ENCODE measurements at regions of chr10 and their contacts with region 1.

Region 1: GRCh38 chr10:13787015-13787421 is 200.3 kb downstream of the PRPF18 start:
- DNase-seq: peak in 1 of 2 donors; percentile 46
- ATAC-seq: peak in 7 of 8 donors; percentile 22 to 69 (median 54)
- H3K4me3 ChIP-seq: no peak overlapping the region
- H3K27ac ChIP-seq: peak overlapping the region in 8 of 10 donors; percentile 16 to 82 (median 68)
- H3K4me1 ChIP-seq: peaks cover 12 to 51% (median 36%) of the 10 kb centered on the region in 9 donors
- H3K27me3 ChIP-seq: no peaks in the 10 kb centered on the region
- CTCF ChIP-seq: no peak

Region 2: GRCh38 chr10:13673156-13673555 is 113.9 kb before region 1 on chr10:
- intact Hi-C with region 1: no loop called
- DNase-seq: no peak
- ATAC-seq: no peak
- H3K4me3 ChIP-seq: no peak overlapping the region
- H3K27ac ChIP-seq: no peak overlapping the region
- H3K4me1 ChIP-seq: peaks cover 0 to 57% (median 20%) of the 10 kb centered on the region in 9 donors
- H3K27me3 ChIP-seq: no peaks in the 10 kb centered on the region
- CTCF ChIP-seq: no peak

Region 3: GRCh38 chr10:13882112-13882711 is 95.2 kb after region 1 on chr10:
- intact Hi-C with region 1: loop called in 1 of 10 experiments (anchors 5 kb)
- DNase-seq: peak in 1 of 2 donors; percentile 69
- ATAC-seq: peak; percentile 70 to 94 (median 82)
- H3K4me3 ChIP-seq: peak overlapping the region in 1 of 10 donors; percentile 11
- H3K27ac ChIP-seq: peak overlapping the region; percentile 56 to 92 (median 76)
- H3K4me1 ChIP-seq: peaks cover 7 to 66% (median 43%) of the 10 kb centered on the region in 9 donors
- H3K27me3 ChIP-seq: no peaks in the 10 kb centered on the region
- CTCF ChIP-seq: no peak

Region 4: DNA sequence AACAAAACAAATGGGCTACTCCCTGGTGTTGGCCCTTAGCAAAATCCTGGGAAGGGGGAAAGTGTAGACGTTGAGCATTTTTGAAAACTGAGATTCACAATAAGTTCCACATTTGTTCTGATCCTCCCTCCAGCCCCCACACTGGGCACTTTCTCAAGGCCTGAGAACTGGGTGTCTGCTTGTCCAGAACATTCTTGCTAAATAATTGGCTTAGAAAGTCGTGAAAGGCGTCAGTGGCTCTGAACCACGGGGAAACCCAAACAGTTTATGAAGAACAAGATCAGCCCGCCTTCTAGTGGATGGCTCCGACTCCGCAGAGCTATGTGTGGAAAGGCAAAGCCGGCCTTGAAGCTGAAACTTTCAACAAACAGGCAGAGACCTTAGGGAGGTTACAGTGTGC is 169.8 kb after region 1 on chr10:
- intact Hi-C with region 1: loop called in 3 of 10 experiments (anchors 5 to 10 kb)
- DNase-seq: peak; percentile 35 to 59
- ATAC-seq: peak; percentile 60 to 89 (median 84)
- H3K4me3 ChIP-seq: no peak overlapping the region
- H3K27ac ChIP-seq: peak overlapping the region in 7 of 10 donors; percentile 9 to 65 (median 41)
- H3K4me1 ChIP-seq: peaks cover 0 to 31% (median 13%) of the 10 kb centered on the region in 9 donors
- H3K27me3 ChIP-seq: no peaks in the 10 kb centered on the region
- CTCF ChIP-seq: peak in 7 of 9 donors; percentile 31 to 60 (median 36)

Region 5: GRCh38 chr10:14093730-14094484 is 306.9 kb after region 1 on chr10:
- intact Hi-C with region 1: loop called (anchors 1 to 5 kb)
- DNase-seq: no peak
- ATAC-seq: peak in 6 of 8 donors; percentile 25 to 63 (median 44)
- H3K4me3 ChIP-seq: no peak overlapping the region
- H3K27ac ChIP-seq: no peak overlapping the region
- H3K4me1 ChIP-seq: peaks cover 0 to 12% (median 5%) of the 10 kb centered on the region in 9 donors
- H3K27me3 ChIP-seq: no peaks in the 10 kb centered on the region
- CTCF ChIP-seq: peak; percentile 22 to 73 (median 62)

Region 6: GRCh38 chr10:14185316-14186045 is 398.5 kb after region 1 on chr10:
- intact Hi-C with region 1: loop called in 3 of 10 experiments (anchors 10 kb)
- DNase-seq: no peak
- ATAC-seq: no peak
- H3K4me3 ChIP-seq: no peak overlapping the region
- H3K27ac ChIP-seq: no peak overlapping the region
- H3K4me1 ChIP-seq: peaks cover 0 to 4% (median 0%) of the 10 kb centered on the region in 9 donors
- H3K27me3 ChIP-seq: peaks cover 0 to 35% (median 24%) of the 10 kb centered on the region in 7 donors
- CTCF ChIP-seq: no peak

Region 7: GRCh38 chr10:14478604-14479003 is 691.6 kb after region 1 on chr10:
- intact Hi-C with region 1: loop called in 8 of 10 experiments (anchors 5 to 10 kb)
- DNase-seq: peak; percentile 65 to 68
- ATAC-seq: peak in 7 of 8 donors; percentile 71 to 86 (median 78)
- H3K4me3 ChIP-seq: no peak overlapping the region
- H3K27ac ChIP-seq: no peak overlapping the region
- H3K4me1 ChIP-seq: peaks cover 0 to 9% (median 4%) of the 10 kb centered on the region in 9 donors
- H3K27me3 ChIP-seq: peaks cover 0 to 3% (median 0%) of the 10 kb centered on the region in 7 donors
- CTCF ChIP-seq: peak; percentile 45 to 82 (median 68)

Measured in heart right ventricle (tissue), 16 donors.